Naive thymus-derived CD4-positive, alpha-beta T cell (primary cell): ENCODE measurements at regions of chr1 and their contacts with region 1.

Region 1: GRCh38 chr1:207084701-207085180 is 3.9 kb upstream of the C4BPB start:
- DNase-seq: peak in 8 of 9 donors; percentile 43 to 71 (median 62)
- ATAC-seq: peak; percentile 67
- H3K4me3 ChIP-seq: no peak overlapping the region
- H3K4me3 Mint-ChIP-seq: no peak overlapping the region
- H3K27ac ChIP-seq: no peak overlapping the region
- H3K27ac Mint-ChIP-seq: peak overlapping the region in 5 of 9 donors; percentile 5 to 78 (median 53)
- H3K4me1 ChIP-seq: peaks cover 0 to 15% of the 10 kb centered on the region in 2 donors
- H3K4me1 Mint-ChIP-seq: peaks cover 3 to 33% (median 32%) of the 10 kb centered on the region in 7 donors
- H3K27me3 ChIP-seq: no peaks in the 10 kb centered on the region
- H3K27me3 Mint-ChIP-seq: peaks cover 0 to 34% (median 0%) of the 10 kb centered on the region in 5 donors

Region 2: DNA sequence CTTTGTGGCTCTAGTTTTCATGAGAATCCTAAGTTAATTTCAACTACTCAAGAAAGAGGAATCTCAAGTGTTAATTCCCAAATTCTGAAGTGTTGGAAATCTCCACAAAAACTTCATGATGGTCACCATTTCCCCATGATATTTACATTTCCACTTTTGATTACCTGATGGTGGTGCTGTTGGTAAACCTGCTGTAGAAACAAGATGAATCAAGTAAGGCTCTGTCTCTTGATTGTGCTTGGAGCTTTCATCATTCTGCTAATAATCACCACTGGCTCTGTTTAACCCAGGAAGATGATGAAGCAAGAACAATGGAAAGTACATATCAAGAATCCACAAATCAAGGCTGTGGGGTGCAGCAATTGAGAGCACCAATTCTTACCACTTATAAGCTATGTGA is 97.1 kb after region 1 on chr1:
- CTCF ChIA-PET with region 1: interaction called, 9 read pairs
- POLR2A ChIA-PET with region 1: no interaction called
- intact Hi-C with region 1: loop called in 1 of 2 experiments (anchors 1 kb)
- DNase-seq: peak in 5 of 9 donors; percentile 5 to 35 (median 10)
- ATAC-seq: no peak
- H3K4me3 ChIP-seq: no peak overlapping the region
- H3K4me3 Mint-ChIP-seq: no peak overlapping the region
- H3K27ac ChIP-seq: no peak overlapping the region
- H3K27ac Mint-ChIP-seq: no peak overlapping the region
- H3K4me1 ChIP-seq: no peaks in the 10 kb centered on the region
- H3K4me1 Mint-ChIP-seq: peaks cover 0 to 5% (median 0%) of the 10 kb centered on the region in 7 donors
- H3K27me3 ChIP-seq: no peaks in the 10 kb centered on the region
- H3K27me3 Mint-ChIP-seq: peaks cover 0 to 39% (median 9%) of the 10 kb centered on the region in 5 donors